Activated B cell treated with CpG ODN at 0.5 μM for 24 hours (primary cell): ENCODE measurements at regions of chr5 and their contacts with region 1.

Region 1: DNA sequence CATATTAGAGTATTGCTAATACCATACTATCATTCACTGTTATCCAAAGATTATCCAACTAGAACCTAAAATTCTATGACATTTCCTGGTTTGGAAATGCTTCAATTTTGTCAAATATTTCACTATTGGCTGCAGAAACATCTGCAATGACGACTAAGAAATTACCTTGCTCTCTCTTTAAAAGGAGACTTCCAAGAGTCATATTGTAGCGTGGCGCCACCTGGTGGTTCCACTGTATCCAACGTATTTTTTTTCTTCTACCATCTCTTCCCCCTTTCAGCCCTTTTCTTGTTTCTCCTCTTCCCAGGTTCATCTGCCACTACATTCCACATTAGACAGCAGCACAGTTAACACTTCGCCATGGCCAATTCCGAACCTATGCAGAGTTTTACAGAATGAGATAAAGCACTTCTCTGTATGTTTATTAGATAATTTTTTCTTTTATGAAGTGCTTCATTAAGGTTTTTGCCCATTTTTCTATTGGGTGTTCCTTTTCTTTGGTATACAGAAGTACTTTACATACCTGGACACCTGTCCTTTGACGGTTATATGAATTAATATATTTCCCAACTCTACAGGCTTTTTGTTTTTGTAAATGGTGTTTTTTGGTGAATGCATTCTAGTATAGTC is 153.5 kb downstream of the CDC42SE2 start:
- DNase-seq: peak; percentile 56
- ATAC-seq: peak; percentile 61
- H3K4me3 Mint-ChIP-seq: peak overlapping the region; percentile 56
- H3K27ac Mint-ChIP-seq: peak overlapping the region; percentile 15
- H3K4me1 Mint-ChIP-seq: peaks cover 36% of the 10 kb centered on the region
- H3K27me3 Mint-ChIP-seq: no peaks in the 10 kb centered on the region
- CTCF ChIP-seq: peak; percentile 58

Region 2: GRCh38 chr5:130109152-130109551 is 1308.2 kb before region 1 on chr5:
- CTCF ChIA-PET with region 1: no interaction called
- POLR2A ChIA-PET with region 1: interaction called, 6 read pairs
- intact Hi-C with region 1: loop called (anchors 1 kb)
- DNase-seq: no peak
- ATAC-seq: no peak
- H3K4me3 Mint-ChIP-seq: no peak overlapping the region
- H3K27ac Mint-ChIP-seq: no peak overlapping the region
- H3K4me1 Mint-ChIP-seq: no peaks in the 10 kb centered on the region
- H3K27me3 Mint-ChIP-seq: no peaks in the 10 kb centered on the region
- CTCF ChIP-seq: no peak

Region 3: GRCh38 chr5:130871346-130872086 is 545.8 kb before region 1 on chr5:
- CTCF ChIA-PET with region 1: interaction called, 8 read pairs
- POLR2A ChIA-PET with region 1: no interaction called
- intact Hi-C with region 1: loop called (anchors 1 kb)
- DNase-seq: no peak
- ATAC-seq: peak; percentile 56
- H3K4me3 Mint-ChIP-seq: no peak overlapping the region
- H3K27ac Mint-ChIP-seq: no peak overlapping the region
- H3K4me1 Mint-ChIP-seq: no peaks in the 10 kb centered on the region
- H3K27me3 Mint-ChIP-seq: peaks cover under 1% of the 10 kb centered on the region
- CTCF ChIP-seq: no peak

Region 4: GRCh38 chr5:131109540-131110255 is 307.7 kb before region 1 on chr5:
- CTCF ChIA-PET with region 1: interaction called, 3 read pairs
- POLR2A ChIA-PET with region 1: no interaction called
- intact Hi-C with region 1: loop called (anchors 2 kb)
- DNase-seq: no peak
- ATAC-seq: peak; percentile 64
- H3K4me3 Mint-ChIP-seq: no peak overlapping the region
- H3K27ac Mint-ChIP-seq: no peak overlapping the region
- H3K4me1 Mint-ChIP-seq: no peaks in the 10 kb centered on the region
- H3K27me3 Mint-ChIP-seq: peaks cover 2% of the 10 kb centered on the region
- CTCF ChIP-seq: peak; percentile 43

Region 5: DNA sequence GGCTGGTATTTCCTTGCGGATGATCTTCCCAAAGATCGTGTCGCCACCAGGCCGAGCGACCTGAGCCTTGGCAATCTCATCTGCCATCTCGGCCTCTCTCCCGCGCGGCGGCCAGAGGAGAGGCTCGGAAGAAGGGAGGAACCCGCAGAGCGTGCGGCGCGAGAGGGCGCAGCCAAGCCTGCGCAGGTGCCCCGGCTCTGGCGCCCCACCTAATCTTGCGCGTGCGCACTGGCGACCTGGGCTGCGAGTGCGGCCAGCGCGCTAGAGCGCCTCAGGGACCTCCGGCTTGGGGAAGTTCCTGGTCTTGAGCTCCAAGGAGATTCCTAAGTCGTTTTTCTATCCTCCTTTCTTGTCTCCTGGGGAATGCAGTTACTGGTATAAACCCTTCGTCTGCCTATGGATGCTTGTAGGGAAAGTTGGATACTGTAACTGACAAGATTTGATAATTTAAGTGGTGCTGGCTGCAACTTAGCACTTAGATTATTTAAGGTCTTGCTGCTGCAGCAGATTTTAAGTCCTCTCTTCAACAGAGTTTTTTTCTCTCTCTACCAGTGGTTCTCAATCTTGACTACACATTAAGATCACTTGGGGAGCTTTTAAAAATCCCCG is 252.1 kb before region 1 on chr5 and contains the start of gene HINT1:
- CTCF ChIA-PET with region 1: no interaction called
- POLR2A ChIA-PET with region 1: no interaction called
- intact Hi-C with region 1: loop called (anchors 1 kb)
- DNase-seq: peak; percentile 91
- ATAC-seq: peak; percentile 83
- H3K4me3 Mint-ChIP-seq: peak within 1 kb of the TSS; percentile 96
- H3K27ac Mint-ChIP-seq: peak within 1 kb of the TSS; percentile 95
- H3K4me1 Mint-ChIP-seq: peaks cover 43% of the 10 kb centered on the region
- H3K27me3 Mint-ChIP-seq: no peaks in the 10 kb centered on the region
- CTCF ChIP-seq: no peak
- total RNA-seq, gene HINT1: 201 and 212 TPM in 2 replicates

Region 6: DNA sequence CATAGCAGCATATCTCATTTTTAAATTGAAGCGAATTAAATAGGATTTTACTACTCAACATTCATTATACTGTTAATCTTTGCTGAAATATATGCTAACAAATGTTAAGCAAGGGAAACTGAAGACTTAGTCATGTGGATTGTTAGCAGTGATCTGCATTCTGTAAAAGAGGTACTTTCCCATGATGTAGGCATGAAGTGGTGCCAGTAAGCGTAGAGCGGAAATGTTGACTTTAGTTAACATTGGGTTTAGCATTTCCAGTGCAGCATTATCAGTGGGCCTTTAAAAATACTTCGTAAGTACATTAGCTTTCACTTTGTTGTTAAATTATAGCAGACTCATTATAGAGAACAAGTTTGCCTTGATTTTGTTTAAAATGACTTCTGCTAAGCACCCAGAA is 23.2 kb before region 1 on chr5:
- CTCF ChIA-PET with region 1: no interaction called
- POLR2A ChIA-PET with region 1: interaction called, 5 read pairs
- intact Hi-C with region 1: loop called (anchors 1 kb)
- DNase-seq: no peak
- ATAC-seq: peak; percentile 93
- H3K4me3 Mint-ChIP-seq: peak overlapping the region; percentile 73
- H3K27ac Mint-ChIP-seq: peak overlapping the region; percentile 88
- H3K4me1 Mint-ChIP-seq: peaks cover 71% of the 10 kb centered on the region
- H3K27me3 Mint-ChIP-seq: no peaks in the 10 kb centered on the region
- CTCF ChIP-seq: no peak

Region 7: GRCh38 chr5:132714456-132715307 is 1297.3 kb after region 1 on chr5:
- CTCF ChIA-PET with region 1: no interaction called
- POLR2A ChIA-PET with region 1: no interaction called
- intact Hi-C with region 1: no loop called
- DNase-seq: no peak
- ATAC-seq: no peak
- H3K4me3 Mint-ChIP-seq: no peak overlapping the region
- H3K27ac Mint-ChIP-seq: no peak overlapping the region
- H3K4me1 Mint-ChIP-seq: no peaks in the 10 kb centered on the region
- H3K27me3 Mint-ChIP-seq: no peaks in the 10 kb centered on the region
- CTCF ChIP-seq: no peak

Region 8: GRCh38 chr5:132905867-132906295 is 1488.5 kb after region 1 on chr5:
- CTCF ChIA-PET with region 1: no interaction called
- POLR2A ChIA-PET with region 1: no interaction called
- intact Hi-C with region 1: no loop called
- DNase-seq: no peak
- ATAC-seq: no peak
- H3K4me3 Mint-ChIP-seq: no peak overlapping the region
- H3K27ac Mint-ChIP-seq: no peak overlapping the region
- H3K4me1 Mint-ChIP-seq: peaks cover 14% of the 10 kb centered on the region
- H3K27me3 Mint-ChIP-seq: no peaks in the 10 kb centered on the region
- CTCF ChIP-seq: no peak